B cell (primary cell): ENCODE measurements at regions of chr11 and their contacts with region 1.

Region 1: GRCh38 chr11:68271781-68272608 is at the start of gene C11orf24:
- DNase-seq: peak; percentile 98
- ATAC-seq: peak; percentile 74
- H3K4me3 ChIP-seq: peak within 1 kb of the TSS; percentile 62 to 99 (median 98)
- H3K4me3 Mint-ChIP-seq: peak within 1 kb of the TSS; percentile 91
- H3K27ac ChIP-seq: peak within 1 kb of the TSS; percentile 98
- H3K27ac Mint-ChIP-seq: peak within 1 kb of the TSS; percentile 97
- H3K4me1 ChIP-seq: peaks cover 58 to 70% of the 10 kb centered on the region in 2 donors
- H3K4me1 Mint-ChIP-seq: peaks cover 74% of the 10 kb centered on the region
- H3K27me3 ChIP-seq: no peaks in the 10 kb centered on the region
- H3K27me3 Mint-ChIP-seq: no peaks in the 10 kb centered on the region
- CTCF ChIP-seq: no peak
- total RNA-seq, gene C11orf24: 81.8 and 88.6 TPM in 2 replicates

Region 2: DNA sequence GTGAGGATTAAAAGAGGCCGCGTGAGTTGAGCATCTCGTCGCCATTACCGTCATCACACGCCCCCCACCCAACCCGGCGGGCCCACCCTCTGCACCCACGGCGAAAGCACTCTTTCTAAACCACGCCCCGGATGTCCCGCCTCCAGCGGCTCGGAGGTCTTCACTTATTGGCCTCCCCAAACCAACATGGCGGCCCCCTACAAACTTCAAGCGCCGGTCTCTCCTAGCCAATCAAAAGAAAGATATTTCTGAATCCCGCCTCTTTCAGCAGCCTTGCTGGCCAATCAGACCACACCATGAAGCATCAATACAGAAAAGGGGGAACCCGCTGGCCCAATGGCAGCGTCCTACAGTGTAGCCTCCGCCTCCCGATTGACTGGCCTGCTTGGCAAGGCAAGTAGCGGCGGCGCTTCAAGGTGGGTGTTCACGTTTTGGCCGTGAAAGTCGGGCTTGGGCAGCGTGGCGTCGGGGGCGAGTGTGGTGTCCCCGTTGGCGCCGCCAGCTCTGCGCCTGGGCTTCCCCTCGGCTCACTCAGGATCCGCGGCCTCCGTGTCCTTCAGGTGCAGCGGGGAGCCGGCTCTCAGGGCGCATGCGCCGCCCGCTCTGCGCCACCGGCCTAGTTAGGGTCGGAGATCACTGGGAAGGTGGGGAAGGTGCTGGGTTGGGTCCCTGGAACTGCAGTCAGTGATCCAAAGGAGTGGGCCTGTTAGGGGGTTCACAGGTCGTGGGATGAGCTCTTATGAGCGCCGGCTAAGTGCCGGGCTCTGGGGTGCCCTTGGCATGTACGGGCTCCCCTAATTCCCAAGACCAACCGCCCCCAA is 241.5 kb before region 1 on chr11 and contains the start of gene NDUFS8:
- CTCF ChIA-PET with region 1: no interaction called
- POLR2A ChIA-PET with region 1: no interaction called
- intact Hi-C with region 1: loop called (anchors 5 kb)
- DNase-seq: peak; percentile 98
- ATAC-seq: peak; percentile 96
- H3K4me3 ChIP-seq: peak within 1 kb of the TSS; percentile 56 to 90 (median 81)
- H3K4me3 Mint-ChIP-seq: peak within 1 kb of the TSS; percentile 100
- H3K27ac ChIP-seq: peak within 1 kb of the TSS; percentile 57 to 78
- H3K27ac Mint-ChIP-seq: peak within 1 kb of the TSS; percentile 94
- H3K4me1 ChIP-seq: peaks cover 12 to 20% of the 10 kb centered on the region in 2 donors
- H3K4me1 Mint-ChIP-seq: peaks cover 21% of the 10 kb centered on the region
- H3K27me3 ChIP-seq: no peaks in the 10 kb centered on the region
- H3K27me3 Mint-ChIP-seq: no peaks in the 10 kb centered on the region
- CTCF ChIP-seq: no peak
- total RNA-seq, gene NDUFS8: 73.9 and 75.2 TPM in 2 replicates

Region 3: DNA sequence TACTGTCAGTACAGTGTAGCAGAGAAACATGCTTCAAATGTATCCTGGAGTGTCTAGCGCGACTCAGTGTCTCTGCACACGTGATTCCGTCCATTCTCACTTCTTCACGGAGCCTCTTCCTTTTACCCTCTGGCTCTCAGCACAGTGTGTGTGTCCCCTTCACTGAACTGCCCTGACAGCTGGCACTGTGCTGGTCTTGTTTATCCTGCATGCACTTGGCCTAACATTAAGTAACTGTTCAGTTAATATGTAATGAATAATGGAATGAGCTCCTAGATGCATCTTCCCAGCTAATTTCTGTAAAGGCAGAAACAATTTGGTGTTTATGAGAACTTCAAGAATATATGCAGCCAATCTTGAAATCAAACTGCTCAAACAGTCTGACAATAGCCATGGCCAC is 103.3 kb before region 1 on chr11:
- CTCF ChIA-PET with region 1: no interaction called
- POLR2A ChIA-PET with region 1: no interaction called
- intact Hi-C with region 1: no loop called
- DNase-seq: no peak
- ATAC-seq: no peak
- H3K4me3 ChIP-seq: no peak overlapping the region
- H3K4me3 Mint-ChIP-seq: no peak overlapping the region
- H3K27ac ChIP-seq: no peak overlapping the region
- H3K27ac Mint-ChIP-seq: no peak overlapping the region
- H3K4me1 ChIP-seq: no peaks in the 10 kb centered on the region
- H3K4me1 Mint-ChIP-seq: no peaks in the 10 kb centered on the region
- H3K27me3 ChIP-seq: no peaks in the 10 kb centered on the region
- H3K27me3 Mint-ChIP-seq: no peaks in the 10 kb centered on the region
- CTCF ChIP-seq: no peak

Region 4: DNA sequence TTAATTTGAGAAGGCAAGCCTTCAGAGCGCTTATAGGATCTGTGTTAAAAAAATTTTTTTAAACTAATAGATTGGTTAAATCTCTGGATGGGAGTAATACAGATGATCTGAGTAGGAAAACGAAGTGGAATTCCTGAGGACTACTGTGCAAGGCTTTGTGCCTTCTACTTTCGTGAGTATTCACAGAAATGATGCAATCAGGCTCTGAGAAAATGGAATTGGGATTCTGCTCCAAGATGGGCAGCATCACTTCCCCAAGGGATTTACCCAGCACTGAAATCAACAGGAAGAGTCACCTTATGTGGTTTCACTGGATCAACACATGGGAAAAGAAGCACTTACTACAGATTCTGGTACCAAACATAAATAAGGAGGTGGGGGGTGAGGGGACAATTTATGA is 71.4 kb before region 1 on chr11:
- CTCF ChIA-PET with region 1: no interaction called
- POLR2A ChIA-PET with region 1: no interaction called
- intact Hi-C with region 1: no loop called
- DNase-seq: no peak
- ATAC-seq: no peak
- H3K4me3 ChIP-seq: no peak overlapping the region
- H3K4me3 Mint-ChIP-seq: no peak overlapping the region
- H3K27ac ChIP-seq: no peak overlapping the region
- H3K27ac Mint-ChIP-seq: no peak overlapping the region
- H3K4me1 ChIP-seq: peaks cover 24 to 36% of the 10 kb centered on the region in 2 donors
- H3K4me1 Mint-ChIP-seq: peaks cover 66% of the 10 kb centered on the region
- H3K27me3 ChIP-seq: no peaks in the 10 kb centered on the region
- H3K27me3 Mint-ChIP-seq: no peaks in the 10 kb centered on the region
- CTCF ChIP-seq: no peak

Region 5: GRCh38 chr11:68235650-68236049 is 36.3 kb before region 1 on chr11:
- CTCF ChIA-PET with region 1: no interaction called
- POLR2A ChIA-PET with region 1: no interaction called
- intact Hi-C with region 1: no loop called
- DNase-seq: no peak
- ATAC-seq: no peak
- H3K4me3 ChIP-seq: no peak overlapping the region
- H3K4me3 Mint-ChIP-seq: no peak overlapping the region
- H3K27ac ChIP-seq: no peak overlapping the region
- H3K27ac Mint-ChIP-seq: no peak overlapping the region
- H3K4me1 ChIP-seq: no peaks in the 10 kb centered on the region
- H3K4me1 Mint-ChIP-seq: no peaks in the 10 kb centered on the region
- H3K27me3 ChIP-seq: peaks cover 0 to 11% (median 2%) of the 10 kb centered on the region in 4 experiments
- H3K27me3 Mint-ChIP-seq: peaks cover 31% of the 10 kb centered on the region
- CTCF ChIP-seq: no peak

Region 6: DNA sequence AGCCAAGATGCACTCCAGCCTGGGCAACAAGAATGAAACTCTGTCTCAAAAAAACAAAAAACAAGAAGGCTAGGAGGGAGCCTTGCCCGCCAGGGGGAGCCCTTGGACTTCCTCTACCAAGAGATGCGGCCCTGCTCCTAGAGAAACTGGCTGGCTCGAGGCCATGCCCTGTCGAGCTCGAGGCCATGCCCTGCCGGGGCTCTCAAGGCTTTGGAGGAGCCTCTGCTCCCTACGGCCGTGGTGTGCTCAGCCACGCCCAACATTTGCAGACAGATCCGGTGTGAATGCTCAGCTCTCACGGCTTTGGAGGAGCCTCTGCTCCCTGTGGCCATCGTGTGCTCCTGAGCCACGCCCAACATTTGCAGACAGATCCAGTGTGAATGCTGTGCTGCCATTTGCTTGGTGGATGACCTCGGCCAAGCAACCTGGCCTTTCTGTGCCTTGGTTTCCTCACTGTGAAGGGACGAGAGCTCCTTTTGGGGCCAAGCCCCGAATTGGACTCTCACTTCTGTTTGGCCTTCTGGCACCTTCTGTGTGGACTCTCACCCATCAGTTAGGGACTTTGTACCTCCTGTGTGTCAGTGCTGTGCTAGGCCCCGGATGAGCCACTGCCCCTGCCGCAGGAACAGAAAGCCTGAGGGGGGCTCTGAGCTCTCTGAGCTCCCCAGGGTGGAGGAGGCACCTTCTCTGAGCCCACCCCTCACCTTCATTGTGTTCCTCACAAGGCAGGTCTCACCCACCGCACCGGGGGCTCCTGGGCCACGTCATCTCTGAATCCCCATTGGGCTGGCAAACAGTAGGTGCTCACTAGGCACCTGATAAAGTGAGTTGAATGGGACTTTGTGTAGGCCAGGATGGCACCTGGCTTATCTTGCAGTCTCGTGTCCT is 14.3 kb before region 1 on chr11:
- CTCF ChIA-PET with region 1: interaction called, 141 read pairs
- POLR2A ChIA-PET with region 1: interaction called, 17 read pairs
- intact Hi-C with region 1: loop called (anchors 1 kb)
- DNase-seq: peak; percentile 91
- ATAC-seq: peak; percentile 94
- H3K4me3 ChIP-seq: no peak overlapping the region
- H3K4me3 Mint-ChIP-seq: peak overlapping the region; percentile 52
- H3K27ac ChIP-seq: peak overlapping the region; percentile 4 to 38
- H3K27ac Mint-ChIP-seq: peak overlapping the region; percentile 91
- H3K4me1 ChIP-seq: peaks cover 11 to 21% of the 10 kb centered on the region in 2 donors
- H3K4me1 Mint-ChIP-seq: peaks cover 24% of the 10 kb centered on the region
- H3K27me3 ChIP-seq: no peaks in the 10 kb centered on the region
- H3K27me3 Mint-ChIP-seq: no peaks in the 10 kb centered on the region
- CTCF ChIP-seq: peak; percentile 92

Region 7: DNA sequence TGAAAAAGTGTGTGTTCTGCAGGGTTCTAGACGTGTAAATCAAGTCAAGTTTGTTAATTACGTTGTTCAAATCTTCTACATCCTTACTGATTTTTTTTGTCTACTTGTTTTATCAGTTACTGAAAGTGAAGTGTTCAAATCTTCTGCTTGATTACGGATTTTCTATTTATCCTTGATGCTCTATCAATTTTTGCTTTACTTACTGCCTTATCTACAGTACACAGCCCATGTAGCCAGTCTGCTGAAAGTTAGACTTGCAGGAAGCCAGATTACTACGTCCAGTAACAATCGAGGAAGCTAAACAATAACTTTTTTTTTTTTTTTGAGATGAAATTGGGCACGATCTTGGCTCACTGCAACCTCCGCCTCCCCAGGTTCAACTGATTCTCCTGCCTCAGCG is 15.4 kb after region 1 on chr11:
- CTCF ChIA-PET with region 1: interaction called, 275 read pairs
- POLR2A ChIA-PET with region 1: interaction called, 14 read pairs
- intact Hi-C with region 1: loop called (anchors 1 kb)
- DNase-seq: no peak
- ATAC-seq: no peak
- H3K4me3 ChIP-seq: no peak overlapping the region
- H3K4me3 Mint-ChIP-seq: no peak overlapping the region
- H3K27ac ChIP-seq: no peak overlapping the region
- H3K27ac Mint-ChIP-seq: no peak overlapping the region
- H3K4me1 ChIP-seq: peaks cover 6 to 12% of the 10 kb centered on the region in 2 donors
- H3K4me1 Mint-ChIP-seq: peaks cover 20% of the 10 kb centered on the region
- H3K27me3 ChIP-seq: no peaks in the 10 kb centered on the region
- H3K27me3 Mint-ChIP-seq: no peaks in the 10 kb centered on the region
- CTCF ChIP-seq: no peak

Region 8: DNA sequence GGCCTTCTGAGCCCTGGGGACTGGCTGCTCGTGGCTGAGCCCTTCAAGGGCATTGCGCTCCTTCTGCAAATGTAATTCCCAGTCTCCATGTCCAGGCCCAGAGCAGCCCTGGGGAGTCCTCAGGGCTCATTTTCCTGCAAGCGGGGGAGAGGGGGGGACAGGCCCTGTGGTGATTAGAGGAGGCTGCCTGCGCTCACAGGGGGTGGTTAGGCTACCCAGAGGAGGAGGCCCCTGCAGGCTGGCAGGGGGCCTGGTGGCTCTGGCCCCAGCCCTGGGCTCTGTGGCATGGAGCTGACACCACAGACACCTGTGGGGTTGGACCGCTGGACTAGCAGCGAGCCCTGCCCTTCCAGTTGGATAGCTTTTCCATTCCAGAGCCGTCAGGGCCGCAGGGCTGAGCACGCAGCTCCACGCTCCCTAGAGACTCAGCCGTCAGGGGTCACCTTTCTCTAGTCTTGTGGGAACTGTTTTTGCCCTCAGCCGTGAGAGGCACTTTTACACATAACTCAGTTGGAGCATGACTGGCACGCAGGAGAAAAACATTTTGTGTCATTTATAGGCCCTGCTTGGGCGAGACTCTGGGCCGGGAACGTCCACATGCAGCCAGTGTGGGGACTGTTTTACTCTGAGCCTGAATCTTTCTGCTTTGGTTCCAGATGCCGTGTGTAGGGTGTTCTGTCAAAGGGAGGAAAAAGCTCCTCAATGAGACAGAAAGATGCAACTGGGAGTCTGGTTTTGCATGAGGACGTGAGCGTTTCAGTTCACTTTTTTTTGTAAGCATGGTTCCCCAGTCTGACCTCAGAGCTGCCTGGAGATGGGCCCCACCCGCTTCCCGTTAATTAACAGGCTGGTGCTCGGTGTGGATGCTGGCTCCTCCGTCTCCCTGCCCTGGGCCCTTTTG is 98.5 kb after region 1 on chr11:
- CTCF ChIA-PET with region 1: interaction called, 3 read pairs
- POLR2A ChIA-PET with region 1: interaction called, 5 read pairs
- intact Hi-C with region 1: loop called (anchors 2 kb)
- DNase-seq: peak; percentile 87
- ATAC-seq: peak; percentile 83
- H3K4me3 ChIP-seq: peak overlapping the region in 4 of 5 experiments; percentile 28 to 59 (median 36)
- H3K4me3 Mint-ChIP-seq: peak overlapping the region; percentile 84
- H3K27ac ChIP-seq: peak overlapping the region; percentile 52 to 67
- H3K27ac Mint-ChIP-seq: peak overlapping the region; percentile 86
- H3K4me1 ChIP-seq: peaks cover 56 to 64% of the 10 kb centered on the region in 2 donors
- H3K4me1 Mint-ChIP-seq: peaks cover 68% of the 10 kb centered on the region
- H3K27me3 ChIP-seq: peaks cover 0 to 10% (median under 1%) of the 10 kb centered on the region in 4 experiments
- H3K27me3 Mint-ChIP-seq: peaks cover 15% of the 10 kb centered on the region
- CTCF ChIP-seq: no peak